K562 (cell line): ENCODE measurements at regions of chr17 and their contacts with region 1.

Region 1: DNA sequence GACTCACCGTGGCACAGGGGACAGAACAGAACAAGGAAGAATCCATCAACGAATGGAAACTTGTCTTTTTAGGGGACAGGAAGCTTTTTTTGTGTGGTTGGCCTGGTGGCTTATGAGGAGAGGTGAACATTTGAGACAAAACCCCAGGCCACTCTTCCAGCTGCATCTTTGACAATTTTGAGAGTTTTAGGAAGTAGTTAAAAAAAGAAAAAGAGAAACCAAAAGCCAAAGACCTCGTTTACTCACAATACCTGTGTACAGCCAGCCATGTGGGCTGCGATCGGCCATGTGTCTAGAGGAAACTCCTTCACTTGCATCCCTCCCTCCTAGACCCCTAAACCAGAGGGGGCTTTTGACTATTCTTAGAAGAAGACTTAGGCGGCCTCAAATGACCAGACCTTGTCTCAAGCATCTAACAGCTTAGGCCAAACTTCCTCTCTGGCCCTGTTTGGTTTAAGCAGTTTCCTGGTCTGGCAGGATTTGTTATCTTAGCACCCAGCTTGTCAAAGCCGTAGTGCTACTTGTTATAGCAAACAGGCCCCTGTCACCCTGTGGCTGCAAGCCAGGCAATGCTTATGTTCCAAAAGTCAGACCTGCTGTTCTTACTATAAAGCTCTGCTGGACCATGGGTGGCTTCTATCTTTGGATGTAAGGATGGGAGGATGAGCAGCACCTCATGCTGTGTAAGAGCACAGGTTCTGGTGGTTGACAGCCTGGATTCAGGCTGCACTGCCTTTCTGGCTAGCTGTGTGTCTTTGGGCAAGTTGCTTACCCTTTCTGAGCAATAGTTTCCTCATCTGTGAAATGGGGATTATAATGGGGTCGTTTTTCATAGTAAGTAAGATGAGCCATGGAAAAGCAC is 17.7 kb downstream of the KSR1 start:
- DNase-seq: peak; percentile 75 to 96 (median 86)
- ATAC-seq: peak; percentile 87
- H3K4me3 ChIP-seq: no peak overlapping the region
- H3K27ac ChIP-seq: peak overlapping the region; percentile 79
- H3K4me1 ChIP-seq: peaks cover 67 to 79% of the 10 kb centered on the region in 2 experiments
- H3K27me3 ChIP-seq: no peaks in the 10 kb centered on the region
- CTCF ChIP-seq: no peak
- EP300 ChIP-seq: peak; percentile 97
- POLR2A ChIP-seq: no peak; the same call in 1 of the 2 replicates
- RAD21 ChIP-seq: peak in 1 of 2 experiments; percentile 41; a peak in 2 of 4 replicates

Region 2: DNA sequence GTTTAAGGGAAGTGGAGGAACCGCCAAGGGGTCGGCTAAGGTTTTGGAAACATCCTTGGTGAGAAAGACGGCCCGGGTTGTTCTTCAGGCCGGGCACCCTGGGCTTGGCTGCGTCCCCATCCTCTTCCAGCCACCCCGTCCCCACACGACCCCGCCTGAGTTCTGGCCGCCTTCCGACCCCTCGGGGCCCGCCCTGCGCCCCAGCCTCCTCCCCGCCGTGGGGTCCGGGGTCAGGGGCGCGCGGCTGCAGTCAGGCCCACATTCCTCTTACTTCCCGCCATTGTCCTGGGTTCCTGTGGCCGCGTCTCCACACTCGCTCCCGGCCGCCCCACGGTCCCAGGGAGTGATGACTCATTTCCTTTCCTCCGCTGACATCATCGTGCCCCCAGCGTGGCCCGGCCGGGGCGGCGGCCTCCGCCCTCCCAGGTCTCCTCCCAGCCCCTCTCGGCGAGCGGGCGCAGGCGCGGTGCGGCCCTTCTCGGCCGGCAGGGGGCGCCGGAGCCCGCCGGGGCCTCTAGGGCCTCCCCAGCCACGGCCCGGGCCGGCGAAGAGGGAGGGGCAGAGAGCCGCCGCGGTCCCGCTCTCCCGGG is 120.4 kb before region 1 on chr17:
- CTCF ChIA-PET with region 1: no interaction called
- POLR2A ChIA-PET with region 1: no interaction called
- in situ Hi-C with region 1: no loop called
- intact Hi-C with region 1: no loop called
- DNase-seq: peak; percentile 97
- ATAC-seq: peak; percentile 92
- H3K4me3 ChIP-seq: peak overlapping the region; percentile 79
- H3K27ac ChIP-seq: peak overlapping the region; percentile 98
- H3K4me1 ChIP-seq: peaks cover 33 to 35% of the 10 kb centered on the region in 2 experiments
- H3K27me3 ChIP-seq: no peaks in the 10 kb centered on the region
- CTCF ChIP-seq: peak; percentile 82 to 97 (median 93)
- EP300 ChIP-seq: peak; percentile 81
- POLR2A ChIP-seq: peak; percentile 91
- RAD21 ChIP-seq: peak; percentile 97

Region 3: GRCh38 chr17:27494192-27495091 is 20.5 kb after region 1 on chr17:
- CTCF ChIA-PET with region 1: no interaction called
- POLR2A ChIA-PET with region 1: interaction called, 6 read pairs
- in situ Hi-C with region 1: no loop called
- intact Hi-C with region 1: loop called (anchors 1 kb)
- DNase-seq: no peak
- ATAC-seq: no peak
- H3K4me3 ChIP-seq: no peak overlapping the region
- H3K27ac ChIP-seq: no peak overlapping the region
- H3K4me1 ChIP-seq: peaks cover 35 to 61% of the 10 kb centered on the region in 2 experiments
- H3K27me3 ChIP-seq: no peaks in the 10 kb centered on the region
- CTCF ChIP-seq: peak; percentile 24 to 43 (median 40); a peak in 2 of 6 replicates
- EP300 ChIP-seq: no peak
- POLR2A ChIP-seq: no peak
- RAD21 ChIP-seq: peak in 1 of 2 experiments; percentile 50; a peak in 2 of 4 replicates